Sigmoid colon (tissue), 7 donors: ENCODE measurements at regions of chr5 and their contacts with region 1.

Region 1: GRCh38 chr5:67648201-67648671 is 451.6 kb upstream of the CD180 start:
- DNase-seq: peak; percentile 98
- H3K4me3 ChIP-seq: no peak overlapping the region
- H3K27ac ChIP-seq: peak overlapping the region; percentile 77 to 82 (median 79)
- H3K4me1 ChIP-seq: peaks cover 0 to 62% (median 48%) of the 10 kb centered on the region in 4 donors
- H3K27me3 ChIP-seq: no peaks in the 10 kb centered on the region
- CTCF ChIP-seq: no peak
- EP300 ChIP-seq: peak; percentile 45 to 89 (median 74)
- POLR2A ChIP-seq: no peak

Region 2: DNA sequence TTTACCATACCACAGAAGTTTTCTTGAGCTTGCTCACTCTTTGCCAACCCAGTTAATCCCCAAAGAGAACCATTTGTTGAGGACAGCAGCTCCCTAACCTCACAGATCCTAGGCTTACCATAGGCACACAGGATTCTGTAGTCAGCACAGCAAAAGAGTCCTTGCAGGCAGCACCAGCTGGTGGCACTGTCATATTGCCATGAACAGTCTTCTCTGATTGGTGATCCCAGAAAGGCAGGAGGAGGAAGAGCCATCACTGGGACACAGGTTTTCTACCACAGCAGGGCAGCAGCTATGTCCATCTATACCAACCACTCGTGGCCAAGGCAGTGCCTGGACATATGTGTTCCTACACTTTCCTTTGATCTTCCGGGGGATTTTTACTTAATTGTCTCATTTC is 154.6 kb before region 1 on chr5:
- intact Hi-C with region 1: loop called (anchors 5 kb)
- DNase-seq: no peak
- H3K4me3 ChIP-seq: no peak overlapping the region
- H3K27ac ChIP-seq: peak overlapping the region; percentile 50 to 79 (median 62)
- H3K4me1 ChIP-seq: peaks cover 0 to 47% (median 40%) of the 10 kb centered on the region in 4 donors
- H3K27me3 ChIP-seq: no peaks in the 10 kb centered on the region
- CTCF ChIP-seq: peak in 1 of 4 experiments; percentile 9
- EP300 ChIP-seq: no peak
- POLR2A ChIP-seq: no peak

Region 3: GRCh38 chr5:68252673-68253623 is 604.7 kb after region 1 on chr5:
- intact Hi-C with region 1: loop called (anchors 5 kb)
- DNase-seq: peak; percentile 82
- H3K4me3 ChIP-seq: peak overlapping the region in 3 of 4 donors; percentile 26 to 33 (median 26)
- H3K27ac ChIP-seq: peak overlapping the region; percentile 67 to 83 (median 80)
- H3K4me1 ChIP-seq: peaks cover 0 to 100% (median 99%) of the 10 kb centered on the region in 4 donors
- H3K27me3 ChIP-seq: no peaks in the 10 kb centered on the region
- CTCF ChIP-seq: peak in 3 of 4 experiments; percentile 64 to 73 (median 73)
- EP300 ChIP-seq: peak in 1 of 4 donors; percentile 4
- POLR2A ChIP-seq: no peak